ENCODE measurements at regions of chr7 and their contacts with region 1.

Region 1: GRCh38 chr7:102272075-102272917 is 14.4 kb upstream of the SH2B2 start:
- DNase-seq: no peak
- H3K4me3 ChIP-seq: no peak overlapping the region
- H3K27ac ChIP-seq: no peak overlapping the region
- H3K4me1 ChIP-seq: peaks cover 0 to 6% (median 4%) of the 10 kb centered on the region in 4 donors
- H3K27me3 ChIP-seq: no peaks in the 10 kb centered on the region
- CTCF ChIP-seq: peak; percentile 82 to 89 (median 86)
- EP300 ChIP-seq: no peak
- POLR2A ChIP-seq: no peak

Region 2: GRCh38 chr7:101543846-101544245 is 728.5 kb before region 1 on chr7:
- intact Hi-C with region 1: loop called (anchors 1 kb)
- DNase-seq: no peak
- H3K4me3 ChIP-seq: no peak overlapping the region
- H3K27ac ChIP-seq: no peak overlapping the region
- H3K4me1 ChIP-seq: peaks cover 0 to 5% (median 2%) of the 10 kb centered on the region in 4 donors
- H3K27me3 ChIP-seq: peaks cover 0 to 19% (median 0%) of the 10 kb centered on the region in 4 donors
- CTCF ChIP-seq: no peak
- EP300 ChIP-seq: no peak
- POLR2A ChIP-seq: no peak

Region 3: DNA sequence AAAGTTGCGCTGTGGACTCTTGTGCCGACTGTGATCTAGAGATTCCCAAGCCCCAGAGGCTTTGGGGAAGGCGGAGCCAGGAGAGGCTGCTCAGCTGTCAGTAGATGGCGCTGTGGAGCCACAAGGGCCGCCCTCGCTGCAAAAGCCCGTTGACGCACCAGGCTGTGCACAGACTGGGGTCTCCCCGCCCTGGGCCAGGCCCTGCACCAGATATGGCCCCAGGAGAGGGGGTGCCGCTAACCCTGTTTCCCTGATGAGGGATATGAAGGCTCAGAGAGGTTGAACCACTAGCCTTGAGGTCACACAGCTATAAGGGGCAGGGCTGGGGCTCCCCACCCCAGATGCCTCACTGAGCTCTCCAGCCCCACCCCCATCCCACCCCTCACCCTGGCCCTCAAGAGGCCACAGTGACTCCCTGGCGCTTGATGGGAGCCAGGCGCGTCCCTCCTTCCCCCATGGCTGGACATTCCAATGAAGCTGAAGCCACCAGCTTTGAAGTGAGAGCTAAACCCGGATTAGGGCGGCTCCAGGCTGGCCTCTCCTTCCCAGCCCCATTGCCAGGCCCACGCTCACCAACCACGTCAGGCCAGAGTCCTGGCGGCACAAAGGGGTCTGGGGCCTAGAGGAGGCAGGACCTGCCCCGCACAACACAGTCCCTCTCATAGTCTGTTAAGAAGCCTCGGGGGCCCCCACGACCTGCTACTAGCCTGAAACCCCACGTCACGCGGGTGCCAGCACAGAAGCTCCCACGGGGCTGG is 669.6 kb before region 1 on chr7:
- intact Hi-C with region 1: loop called (anchors 2 kb)
- DNase-seq: no peak
- H3K4me3 ChIP-seq: no peak overlapping the region
- H3K27ac ChIP-seq: no peak overlapping the region
- H3K4me1 ChIP-seq: peaks cover 4 to 8% (median 6%) of the 10 kb centered on the region in 4 donors
- H3K27me3 ChIP-seq: peaks cover 0 to 15% (median 0%) of the 10 kb centered on the region in 4 donors
- CTCF ChIP-seq: peak; percentile 66 to 88 (median 75)
- EP300 ChIP-seq: no peak
- POLR2A ChIP-seq: no peak

Region 4: DNA sequence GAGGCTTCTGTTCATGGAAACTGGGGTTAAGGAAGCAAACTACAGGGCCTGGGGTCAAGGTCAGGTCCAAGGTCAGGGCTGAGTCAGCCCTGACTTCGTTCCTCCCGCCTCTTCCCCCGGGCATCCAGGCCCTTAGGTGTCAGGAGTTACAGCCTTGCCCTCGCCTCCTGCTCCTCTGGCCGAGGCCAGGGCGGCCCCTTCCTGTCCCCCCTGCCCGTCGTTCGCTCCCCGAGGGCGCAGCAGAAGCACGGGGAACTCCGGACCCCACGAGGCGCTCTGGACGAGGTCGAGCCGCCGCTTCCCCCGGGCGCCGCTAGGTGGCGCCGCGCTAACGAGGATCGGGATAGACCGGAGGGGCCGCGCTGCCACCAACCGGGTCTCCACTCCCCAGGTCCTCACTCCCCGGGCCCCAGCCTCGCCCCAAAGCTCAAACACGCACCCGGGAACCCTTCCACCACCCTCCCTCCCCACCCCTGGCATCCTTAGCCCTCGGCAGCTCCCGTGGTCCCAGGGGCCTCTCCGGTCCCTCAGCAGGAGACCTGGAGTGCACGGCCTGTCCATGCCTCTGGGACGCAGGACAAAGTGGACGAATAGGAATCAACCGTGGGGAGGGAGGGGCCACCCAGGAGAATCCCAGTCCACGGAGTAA is 584.0 kb before region 1 on chr7:
- intact Hi-C with region 1: loop called (anchors 2 kb)
- DNase-seq: peak; percentile 94
- H3K4me3 ChIP-seq: peak overlapping the region; percentile 30 to 48 (median 38)
- H3K27ac ChIP-seq: peak overlapping the region in 1 of 4 donors; percentile 24
- H3K4me1 ChIP-seq: peaks cover 10 to 14% (median 13%) of the 10 kb centered on the region in 4 donors
- H3K27me3 ChIP-seq: peaks cover 0 to 11% (median 0%) of the 10 kb centered on the region in 4 donors
- CTCF ChIP-seq: peak; percentile 90 to 99 (median 95)
- EP300 ChIP-seq: no peak
- POLR2A ChIP-seq: no peak